Caco-2 (cell line): ENCODE measurements at regions of chr14 and their contacts with region 1.

Region 1: GRCh38 chr14:88824314-88825077 is at the start of gene TTC8:
- DNase-seq: peak; percentile 86 to 88
- H3K4me3 ChIP-seq: peak within 1 kb of the TSS; percentile 63
- H3K4me3 Mint-ChIP-seq: peak within 1 kb of the TSS; percentile 80
- H3K27ac Mint-ChIP-seq: peak within 1 kb of the TSS; percentile 98
- H3K4me1 ChIP-seq: peaks cover 5% of the 10 kb centered on the region
- H3K4me1 Mint-ChIP-seq: peaks cover 6% of the 10 kb centered on the region
- H3K27me3 ChIP-seq: no peaks in the 10 kb centered on the region
- H3K27me3 Mint-ChIP-seq: peaks cover 5% of the 10 kb centered on the region
- CTCF ChIP-seq: peak in 1 of 2 experiments; percentile 4
- total RNA-seq, gene TTC8: 9.6 and 13.6 TPM in 2 replicates

Region 2: DNA sequence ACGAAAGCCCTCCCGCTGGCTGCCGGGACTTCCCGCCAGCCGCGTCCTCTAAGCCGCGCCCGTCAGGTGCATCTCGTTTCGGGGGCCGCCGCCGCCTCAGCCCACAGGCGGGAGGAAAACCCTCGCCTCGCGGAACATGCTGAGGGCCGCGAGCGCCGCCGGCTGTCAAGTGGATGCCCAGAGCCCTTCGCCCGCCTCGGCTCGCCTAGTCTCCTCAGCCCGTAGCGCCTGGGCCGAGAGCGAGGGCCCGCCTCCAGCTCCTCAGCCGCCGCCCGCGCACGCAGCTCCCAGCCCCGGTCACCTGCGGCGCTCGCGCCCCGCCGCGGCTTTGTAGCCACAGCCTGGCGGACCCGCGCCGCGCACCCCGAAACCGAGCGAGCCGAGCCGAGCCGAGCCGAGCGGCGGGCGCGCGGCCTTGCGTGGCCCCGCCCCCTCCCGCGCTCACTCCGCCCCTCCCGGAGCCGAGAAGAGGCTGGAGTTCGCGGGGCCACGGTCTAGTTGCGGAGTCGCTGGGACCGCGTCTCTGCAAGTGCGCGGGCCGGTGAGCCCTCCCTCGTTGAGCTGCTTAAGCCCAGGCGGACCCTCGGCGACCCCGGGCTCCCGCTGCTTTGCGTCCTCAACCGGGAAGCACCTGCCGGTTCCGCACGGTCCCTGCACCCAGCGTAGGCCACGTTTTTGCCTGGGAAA is 31.8 kb before region 1 on chr14 and contains the start of gene EML5:
- CTCF ChIA-PET with region 1: interaction called, 5 read pairs
- POLR2A ChIA-PET with region 1: interaction called, 3 read pairs
- intact Hi-C with region 1: loop called (anchors 2 kb)
- DNase-seq: peak; percentile 78 to 91
- H3K4me3 ChIP-seq: peak within 1 kb of the TSS; percentile 60
- H3K4me3 Mint-ChIP-seq: peak within 1 kb of the TSS; percentile 67
- H3K27ac Mint-ChIP-seq: no peak within 1 kb of the TSS
- H3K4me1 ChIP-seq: no peaks in the 10 kb centered on the region
- H3K4me1 Mint-ChIP-seq: no peaks in the 10 kb centered on the region
- H3K27me3 ChIP-seq: no peaks in the 10 kb centered on the region
- H3K27me3 Mint-ChIP-seq: peaks cover 4% of the 10 kb centered on the region
- CTCF ChIP-seq: peak; percentile 3 to 37
- total RNA-seq, gene EML5: 0.11 and 0.28 TPM in 2 replicates